ENCODE measurements at regions of chr6 and their contacts with region 1.

Region 1: DNA sequence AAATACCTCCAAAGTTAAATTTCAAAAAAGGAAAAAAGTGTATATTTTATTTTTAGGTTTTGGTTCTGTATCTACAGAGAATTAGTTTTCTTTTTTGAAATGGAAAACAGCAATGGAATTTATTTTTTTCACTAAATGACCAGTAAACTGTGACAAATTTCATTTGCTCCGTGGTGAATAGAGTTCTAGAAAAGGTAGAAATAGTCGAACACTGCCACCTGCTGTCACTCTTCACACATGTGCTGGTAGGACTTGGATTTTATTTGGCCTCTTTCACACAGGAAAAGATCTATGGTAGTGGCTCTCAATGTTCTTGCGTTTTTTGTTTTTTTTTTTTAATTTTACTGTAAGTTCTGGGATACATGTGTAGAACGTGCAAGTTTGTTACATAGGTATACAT is 312.5 kb downstream of the EYA4 start:
- DNase-seq: peak in 5 of 9 donors; percentile 7 to 23 (median 14)
- ATAC-seq: no peak
- H3K4me3 ChIP-seq: no peak overlapping the region
- H3K4me3 Mint-ChIP-seq: no peak overlapping the region
- H3K27ac ChIP-seq: no peak overlapping the region
- H3K27ac Mint-ChIP-seq: no peak overlapping the region
- H3K4me1 ChIP-seq: no peaks in the 10 kb centered on the region
- H3K4me1 Mint-ChIP-seq: no peaks in the 10 kb centered on the region
- H3K27me3 ChIP-seq: no peaks in the 10 kb centered on the region
- H3K27me3 Mint-ChIP-seq: peaks cover 0 to 6% (median 0%) of the 10 kb centered on the region in 5 donors

Region 2: GRCh38 chr6:132937466-132937906 is 616.2 kb before region 1 on chr6:
- CTCF ChIA-PET with region 1: no interaction called
- POLR2A ChIA-PET with region 1: no interaction called
- intact Hi-C with region 1: loop called in 1 of 2 experiments (anchors 10 kb)
- DNase-seq: no peak
- ATAC-seq: no peak
- H3K4me3 ChIP-seq: no peak overlapping the region
- H3K4me3 Mint-ChIP-seq: no peak overlapping the region
- H3K27ac ChIP-seq: no peak overlapping the region
- H3K27ac Mint-ChIP-seq: no peak overlapping the region
- H3K4me1 ChIP-seq: no peaks in the 10 kb centered on the region
- H3K4me1 Mint-ChIP-seq: no peaks in the 10 kb centered on the region
- H3K27me3 ChIP-seq: no peaks in the 10 kb centered on the region
- H3K27me3 Mint-ChIP-seq: peaks cover 14 to 31% (median 18%) of the 10 kb centered on the region in 5 donors

Region 3: GRCh38 chr6:133184798-133185372 is 368.8 kb before region 1 on chr6:
- CTCF ChIA-PET with region 1: no interaction called
- POLR2A ChIA-PET with region 1: no interaction called
- intact Hi-C with region 1: loop called in 1 of 2 experiments (anchors 2 kb)
- DNase-seq: no peak
- ATAC-seq: no peak
- H3K4me3 ChIP-seq: no peak overlapping the region
- H3K4me3 Mint-ChIP-seq: no peak overlapping the region
- H3K27ac ChIP-seq: no peak overlapping the region
- H3K27ac Mint-ChIP-seq: no peak overlapping the region
- H3K4me1 ChIP-seq: no peaks in the 10 kb centered on the region
- H3K4me1 Mint-ChIP-seq: no peaks in the 10 kb centered on the region
- H3K27me3 ChIP-seq: no peaks in the 10 kb centered on the region
- H3K27me3 Mint-ChIP-seq: peaks cover 0 to 5% (median 0%) of the 10 kb centered on the region in 5 donors

Region 4: DNA sequence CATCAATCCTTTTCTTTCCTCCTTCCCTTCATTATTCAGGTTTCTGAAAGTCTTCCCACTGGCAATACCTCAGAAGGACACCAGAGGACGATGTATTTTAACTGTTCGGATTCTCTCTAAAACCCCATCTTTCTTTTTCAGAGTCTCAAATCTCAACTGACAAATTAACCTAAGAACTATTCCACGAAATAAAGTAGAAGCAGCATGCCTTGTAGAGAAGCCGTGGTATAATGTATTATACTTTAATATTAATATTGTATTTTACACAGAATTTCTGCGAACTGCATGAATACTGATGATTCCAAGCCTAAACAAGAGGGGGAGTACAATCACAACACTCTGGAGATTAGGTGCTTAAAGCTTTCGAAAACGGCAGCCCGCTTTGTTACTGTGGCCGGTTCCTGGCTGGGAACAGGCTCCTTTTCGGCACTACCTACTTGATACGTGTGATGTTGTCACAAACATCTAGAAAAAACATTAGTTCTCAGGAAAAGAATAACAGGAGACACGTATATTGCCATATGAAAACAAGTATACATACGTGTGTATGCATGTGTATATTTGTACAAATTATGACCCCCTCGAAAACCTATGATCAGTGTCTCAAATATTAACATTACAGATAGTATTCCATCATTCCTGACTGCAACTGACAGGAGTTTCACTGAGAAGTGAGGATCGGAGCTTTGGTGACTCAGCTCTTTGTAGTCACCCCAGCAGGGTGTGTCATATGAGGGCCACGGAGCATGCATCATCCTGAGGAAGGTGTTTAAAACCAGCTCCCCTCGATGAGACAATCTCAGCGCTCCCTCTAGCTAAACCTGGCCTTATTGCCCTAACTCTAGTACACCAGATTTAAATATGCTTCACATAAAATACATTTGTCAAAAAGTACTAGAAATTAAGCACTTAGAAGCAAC is 15.6 kb after region 1 on chr6:
- CTCF ChIA-PET with region 1: no interaction called
- POLR2A ChIA-PET with region 1: no interaction called
- intact Hi-C with region 1: no loop called
- DNase-seq: no peak
- ATAC-seq: no peak
- H3K4me3 ChIP-seq: no peak overlapping the region
- H3K4me3 Mint-ChIP-seq: peak overlapping the region; percentile 47 to 77 (median 62)
- H3K27ac ChIP-seq: no peak overlapping the region
- H3K27ac Mint-ChIP-seq: no peak overlapping the region
- H3K4me1 ChIP-seq: no peaks in the 10 kb centered on the region
- H3K4me1 Mint-ChIP-seq: peaks cover 0 to 8% (median 6%) of the 10 kb centered on the region in 7 donors
- H3K27me3 ChIP-seq: no peaks in the 10 kb centered on the region
- H3K27me3 Mint-ChIP-seq: peaks cover 14 to 54% (median 47%) of the 10 kb centered on the region in 5 donors